Naive thymus-derived CD4-positive, alpha-beta T cell (primary cell): ENCODE measurements at regions of chr9 and their contacts with region 1.

Region 1: GRCh38 chr9:126558051-126558665 is 55.6 kb upstream of the LMX1B start:
- DNase-seq: peak in 8 of 9 donors; percentile 39 to 70 (median 53)
- ATAC-seq: peak; percentile 86
- H3K4me3 ChIP-seq: no peak overlapping the region
- H3K4me3 Mint-ChIP-seq: no peak overlapping the region
- H3K27ac ChIP-seq: no peak overlapping the region
- H3K27ac Mint-ChIP-seq: no peak overlapping the region
- H3K4me1 ChIP-seq: no peaks in the 10 kb centered on the region
- H3K4me1 Mint-ChIP-seq: peaks cover 0 to 2% (median 0%) of the 10 kb centered on the region in 7 donors
- H3K27me3 ChIP-seq: no peaks in the 10 kb centered on the region
- H3K27me3 Mint-ChIP-seq: peaks cover 16 to 35% (median 25%) of the 10 kb centered on the region in 5 donors

Region 2: GRCh38 chr9:126084008-126084407 is 474.1 kb before region 1 on chr9:
- CTCF ChIA-PET with region 1: no interaction called
- POLR2A ChIA-PET with region 1: no interaction called
- intact Hi-C with region 1: no loop called
- DNase-seq: no peak
- ATAC-seq: no peak
- H3K4me3 ChIP-seq: no peak overlapping the region
- H3K4me3 Mint-ChIP-seq: peak overlapping the region in 2 of 10 donors; percentile 7 to 23
- H3K27ac ChIP-seq: no peak overlapping the region
- H3K27ac Mint-ChIP-seq: no peak overlapping the region
- H3K4me1 ChIP-seq: peaks cover 0 to 6% of the 10 kb centered on the region in 2 donors
- H3K4me1 Mint-ChIP-seq: peaks cover 10 to 22% (median 18%) of the 10 kb centered on the region in 7 donors
- H3K27me3 ChIP-seq: no peaks in the 10 kb centered on the region
- H3K27me3 Mint-ChIP-seq: peaks cover 2 to 45% (median 32%) of the 10 kb centered on the region in 5 donors

Region 3: DNA sequence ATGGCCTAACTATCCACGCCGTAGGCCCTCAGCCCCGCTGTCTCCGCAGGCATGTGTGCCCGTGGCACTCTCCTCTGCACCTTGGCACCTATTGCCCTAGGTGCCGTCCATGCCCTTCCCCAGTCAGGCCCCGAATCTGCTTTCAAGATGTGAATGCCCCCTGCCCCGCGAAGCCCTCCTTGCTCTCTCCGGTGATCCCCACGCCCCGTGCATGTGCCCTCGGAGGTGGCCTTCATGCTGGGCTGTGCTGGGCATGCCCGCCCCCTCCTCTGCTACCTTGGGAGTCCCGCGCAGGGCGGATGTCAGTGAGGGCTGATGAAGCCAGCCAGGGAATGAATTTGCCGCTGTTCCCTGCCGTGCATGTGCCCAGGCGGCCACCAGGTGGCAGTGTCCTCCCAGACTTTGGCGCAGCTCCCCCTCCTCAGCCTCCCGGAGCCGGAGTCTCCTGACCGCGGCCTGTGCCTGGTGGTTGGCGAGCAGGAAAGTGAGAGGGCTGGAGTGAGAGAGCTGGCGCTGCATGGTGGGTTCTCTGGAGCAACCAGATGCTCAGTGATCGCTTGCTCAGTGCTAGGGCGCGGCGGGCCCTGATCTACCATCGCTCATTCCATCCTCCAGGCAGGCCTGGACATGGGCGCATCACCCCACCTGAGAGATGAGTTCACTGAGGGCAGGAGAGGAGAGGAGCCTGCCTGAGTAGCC is 57.3 kb before region 1 on chr9:
- CTCF ChIA-PET with region 1: interaction called, 42 read pairs
- POLR2A ChIA-PET with region 1: no interaction called
- intact Hi-C with region 1: loop called in 1 of 2 experiments (anchors 1 kb)
- DNase-seq: peak; percentile 28 to 74 (median 63)
- ATAC-seq: peak; percentile 73
- H3K4me3 ChIP-seq: no peak overlapping the region
- H3K4me3 Mint-ChIP-seq: peak overlapping the region in 8 of 10 donors; percentile 8 to 74 (median 48)
- H3K27ac ChIP-seq: no peak overlapping the region
- H3K27ac Mint-ChIP-seq: no peak overlapping the region
- H3K4me1 ChIP-seq: peaks cover 0 to 3% of the 10 kb centered on the region in 2 donors
- H3K4me1 Mint-ChIP-seq: peaks cover 0 to 8% (median 5%) of the 10 kb centered on the region in 7 donors
- H3K27me3 ChIP-seq: peaks cover 0 to 10% of the 10 kb centered on the region in 2 donors
- H3K27me3 Mint-ChIP-seq: peaks cover 4 to 21% (median 5%) of the 10 kb centered on the region in 5 donors

Region 4: DNA sequence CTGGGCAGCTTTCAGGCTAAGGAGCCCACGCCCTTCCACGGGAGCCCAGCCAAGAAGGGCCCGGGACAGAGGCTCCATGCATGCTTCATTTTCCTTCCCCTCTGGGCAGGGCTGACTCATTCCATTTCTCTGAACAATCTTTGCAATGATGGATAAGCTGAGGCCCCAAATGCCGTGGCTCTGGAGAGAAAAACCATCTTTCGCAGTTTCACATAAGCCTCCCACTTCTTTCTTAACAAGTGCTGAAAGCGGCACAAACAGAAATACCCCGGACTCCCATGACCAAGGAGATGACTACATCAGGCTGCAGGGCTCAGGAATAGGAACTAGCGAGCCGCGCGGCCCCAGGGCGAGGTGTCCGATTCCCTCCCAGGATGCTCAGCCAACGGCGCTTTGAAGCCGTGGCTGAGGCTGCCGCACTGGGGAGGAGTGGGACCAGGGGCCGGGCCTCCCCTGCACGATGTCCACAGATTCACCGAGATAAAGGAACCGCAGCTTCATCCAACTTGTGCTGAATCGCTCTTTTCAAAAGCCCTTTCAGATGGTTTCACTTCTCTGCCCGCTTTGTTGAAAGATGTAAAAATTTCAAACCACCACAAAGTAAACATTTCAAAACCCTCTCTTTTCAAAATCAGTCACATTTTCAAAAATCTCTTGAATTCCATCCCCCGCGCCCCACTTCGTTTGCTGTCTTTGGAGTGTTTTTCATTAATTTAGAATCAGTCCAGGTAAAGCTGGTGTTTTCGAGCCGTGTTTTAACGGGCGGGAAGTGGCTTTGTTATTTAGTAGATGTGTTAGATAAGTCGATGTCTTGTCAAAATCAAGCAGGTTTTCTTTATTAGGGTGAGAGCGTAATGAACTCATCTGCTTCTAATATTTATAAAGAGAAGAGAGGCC is 41.0 kb before region 1 on chr9:
- CTCF ChIA-PET with region 1: interaction called, 5 read pairs
- POLR2A ChIA-PET with region 1: no interaction called
- intact Hi-C with region 1: loop called in 1 of 2 experiments (anchors 5 kb)
- DNase-seq: peak in 2 of 9 donors; percentile 18 to 68
- ATAC-seq: peak; percentile 67
- H3K4me3 ChIP-seq: peak overlapping the region; percentile 46
- H3K4me3 Mint-ChIP-seq: peak overlapping the region; percentile 63 to 90 (median 82)
- H3K27ac ChIP-seq: no peak overlapping the region
- H3K27ac Mint-ChIP-seq: peak overlapping the region in 1 of 9 donors; percentile 59
- H3K4me1 ChIP-seq: peaks cover 0 to 36% of the 10 kb centered on the region in 2 donors
- H3K4me1 Mint-ChIP-seq: peaks cover 10 to 34% (median 20%) of the 10 kb centered on the region in 7 donors
- H3K27me3 ChIP-seq: peaks cover 0 to 18% of the 10 kb centered on the region in 2 donors
- H3K27me3 Mint-ChIP-seq: peaks cover 48 to 72% (median 67%) of the 10 kb centered on the region in 5 donors

Region 5: DNA sequence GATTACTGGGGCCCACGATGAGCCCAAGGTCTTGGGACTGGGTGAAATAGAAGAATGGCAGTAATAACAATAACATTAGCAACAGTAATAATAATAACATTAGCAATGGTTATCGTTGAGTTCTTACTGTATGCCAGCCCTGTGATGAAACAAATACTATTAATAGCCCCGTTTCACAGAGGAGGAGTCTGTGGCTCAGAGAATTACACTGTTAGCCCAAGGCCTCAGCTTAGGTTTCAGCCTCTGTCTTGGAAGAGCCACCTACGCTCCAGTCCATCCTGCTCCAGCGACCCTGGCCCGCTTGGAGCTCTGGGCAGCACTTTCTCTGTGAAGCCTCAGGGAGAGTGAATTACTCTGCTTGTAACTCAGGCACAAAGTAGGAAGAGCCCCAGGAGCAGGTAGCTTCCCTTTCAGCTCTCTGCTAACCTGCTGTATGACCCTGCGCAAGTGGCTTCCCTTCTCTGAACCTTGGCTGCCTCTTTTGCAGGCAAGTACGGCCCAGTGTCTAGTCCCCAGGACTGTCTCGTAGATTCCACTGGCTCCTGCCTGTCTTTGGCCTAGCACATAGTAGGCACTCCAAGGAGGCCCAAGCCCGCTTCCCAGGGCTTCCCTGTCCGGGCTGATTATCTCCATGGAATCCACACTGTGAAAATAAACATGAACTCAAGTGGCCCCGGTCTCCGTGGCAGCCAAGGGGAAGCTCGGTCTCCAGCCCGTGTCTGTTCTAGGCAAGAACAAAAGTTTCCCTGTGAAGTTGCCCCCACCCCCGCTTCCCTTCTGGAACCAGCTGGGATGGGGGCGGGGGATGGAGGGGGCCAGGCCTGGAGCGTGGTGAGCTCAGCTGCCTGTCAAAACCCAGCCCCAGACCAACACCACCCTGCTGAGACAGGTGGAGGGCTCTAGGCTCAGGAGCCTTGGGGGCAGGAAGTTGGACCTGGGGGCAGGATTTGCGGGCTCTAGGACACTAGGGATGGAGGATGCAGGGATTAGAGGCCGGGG is 29.3 kb after region 1 on chr9:
- CTCF ChIA-PET with region 1: no interaction called
- POLR2A ChIA-PET with region 1: no interaction called
- intact Hi-C with region 1: no loop called
- DNase-seq: no peak
- ATAC-seq: no peak
- H3K4me3 ChIP-seq: no peak overlapping the region
- H3K4me3 Mint-ChIP-seq: no peak overlapping the region
- H3K27ac ChIP-seq: no peak overlapping the region
- H3K27ac Mint-ChIP-seq: no peak overlapping the region
- H3K4me1 ChIP-seq: no peaks in the 10 kb centered on the region
- H3K4me1 Mint-ChIP-seq: peaks cover 0 to 1% (median 0%) of the 10 kb centered on the region in 7 donors
- H3K27me3 ChIP-seq: no peaks in the 10 kb centered on the region
- H3K27me3 Mint-ChIP-seq: peaks cover 15 to 76% (median 41%) of the 10 kb centered on the region in 5 donors